ENCODE measurements at regions of chr12 and their contacts with region 1.

Region 1: GRCh38 chr12:30795410-30796312 is 40.9 kb upstream of the CAPRIN2 start:
- DNase-seq: peak; percentile 54
- ATAC-seq: peak; percentile 75
- H3K4me3 ChIP-seq: peak overlapping the region; percentile 71 to 83
- H3K27ac ChIP-seq: peak overlapping the region; percentile 90
- H3K4me1 ChIP-seq: peaks cover 45% of the 10 kb centered on the region
- H3K27me3 ChIP-seq: no peaks in the 10 kb centered on the region
- CTCF ChIP-seq: no peak

Region 2: GRCh38 chr12:29869946-29870345 is 925.7 kb before region 1 on chr12:
- CTCF ChIA-PET with region 1: interaction called, 11 read pairs
- POLR2A ChIA-PET with region 1: no interaction called
- in situ Hi-C with region 1: no loop called
- intact Hi-C with region 1: no loop called
- DNase-seq: no peak
- ATAC-seq: no peak
- H3K4me3 ChIP-seq: no peak overlapping the region
- H3K27ac ChIP-seq: no peak overlapping the region
- H3K4me1 ChIP-seq: no peaks in the 10 kb centered on the region
- H3K27me3 ChIP-seq: no peaks in the 10 kb centered on the region
- CTCF ChIP-seq: no peak

Region 3: DNA sequence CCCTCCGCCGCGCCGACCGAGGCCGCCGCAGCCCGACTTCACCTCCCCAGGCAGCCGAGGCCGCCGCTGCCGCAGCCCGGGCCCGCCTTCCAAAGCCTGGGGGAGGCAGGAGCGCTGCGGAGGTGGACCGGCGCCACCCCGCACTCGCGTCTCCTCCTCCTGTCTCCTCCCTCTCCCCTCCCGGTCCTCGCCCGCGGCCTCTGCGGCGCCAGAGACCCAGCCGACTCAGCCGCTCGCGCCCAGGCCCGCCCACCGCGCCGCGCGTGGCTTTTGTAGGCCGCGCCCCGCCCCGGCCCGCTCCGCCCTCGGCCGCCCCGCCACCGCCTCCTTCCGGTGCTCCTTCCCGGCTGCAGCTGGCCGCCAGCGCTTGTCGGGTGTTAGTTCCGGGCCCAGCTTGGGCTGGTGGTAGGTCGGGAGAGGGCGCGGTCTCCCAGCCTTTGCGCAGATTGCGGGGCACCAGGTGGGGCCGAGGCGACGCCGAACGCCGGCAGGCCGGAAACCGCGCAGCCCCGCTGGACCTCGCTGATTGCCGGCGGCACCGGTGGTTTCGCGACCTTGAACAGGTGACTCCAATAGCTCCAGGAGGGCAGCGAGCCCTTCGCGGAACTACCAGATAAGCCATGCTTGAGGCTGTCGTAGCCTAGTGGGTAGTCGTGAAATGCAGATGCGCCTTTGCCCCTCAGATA is 40.8 kb before region 1 on chr12 and contains the start of gene CAPRIN2:
- CTCF ChIA-PET with region 1: interaction called, 4 read pairs
- POLR2A ChIA-PET with region 1: interaction called, 6 read pairs
- in situ Hi-C with region 1: no loop called
- intact Hi-C with region 1: loop called (anchors 5 kb)
- DNase-seq: peak; percentile 83
- ATAC-seq: peak; percentile 98
- H3K4me3 ChIP-seq: peak within 1 kb of the TSS; percentile 88 to 93
- H3K27ac ChIP-seq: peak within 1 kb of the TSS; percentile 98
- H3K4me1 ChIP-seq: peaks cover 35% of the 10 kb centered on the region
- H3K27me3 ChIP-seq: no peaks in the 10 kb centered on the region
- CTCF ChIP-seq: peak; percentile 83
- total RNA-seq, gene CAPRIN2: 28.6 TPM

Region 4: GRCh38 chr12:30806989-30807694 is 11.5 kb after region 1 on chr12:
- CTCF ChIA-PET with region 1: interaction called, 6 read pairs
- POLR2A ChIA-PET with region 1: interaction called, 10 read pairs
- in situ Hi-C with region 1: no loop called
- intact Hi-C with region 1: no loop called
- DNase-seq: peak; percentile 78
- ATAC-seq: peak; percentile 97
- H3K4me3 ChIP-seq: peak overlapping the region in 1 of 2 experiments; percentile 29; a peak in 2 of 4 replicates
- H3K27ac ChIP-seq: peak overlapping the region; percentile 39
- H3K4me1 ChIP-seq: 0 out of 2 replicates have a peak, but pooled peaks cover 3% of the 10 kb centered on the region
- H3K27me3 ChIP-seq: no peaks in the 10 kb centered on the region
- CTCF ChIP-seq: peak; percentile 88

Region 5: DNA sequence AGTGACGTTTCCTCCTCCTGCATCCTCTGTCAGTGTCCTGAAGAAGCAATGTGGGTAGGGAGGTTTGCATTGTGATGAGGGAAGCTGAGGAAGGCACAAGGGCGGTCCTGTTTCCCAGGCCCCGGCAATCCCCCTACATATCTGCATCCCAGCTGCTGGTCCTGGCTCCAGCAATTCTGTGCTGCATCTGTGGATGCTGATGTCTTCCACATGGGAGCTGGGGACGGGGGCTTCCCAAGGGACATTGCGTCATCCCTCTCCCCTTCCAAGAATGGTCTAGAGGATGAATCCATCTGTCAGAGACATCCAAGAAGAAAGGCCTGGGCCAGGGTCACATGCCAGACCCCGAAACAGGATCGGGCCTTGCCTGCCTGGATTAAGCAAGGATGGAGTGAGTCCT is 183.0 kb after region 1 on chr12:
- CTCF ChIA-PET with region 1: no interaction called
- POLR2A ChIA-PET with region 1: no interaction called
- in situ Hi-C with region 1: no loop called
- intact Hi-C with region 1: no loop called
- DNase-seq: no peak
- ATAC-seq: no peak
- H3K4me3 ChIP-seq: no peak overlapping the region
- H3K27ac ChIP-seq: no peak overlapping the region
- H3K4me1 ChIP-seq: no peaks in the 10 kb centered on the region
- H3K27me3 ChIP-seq: peaks cover 9% of the 10 kb centered on the region
- CTCF ChIP-seq: no peak